ENCODE measurements at regions of chrX and their contacts with region 1.

Region 1: GRCh38 chrX:155026726-155027508 is at the start of gene FUNDC2:
- DNase-seq: peak; percentile 87
- ATAC-seq: peak; percentile 93
- H3K4me3 ChIP-seq: peak within 1 kb of the TSS; percentile 63 to 89 (median 78)
- H3K27ac ChIP-seq: peak within 1 kb of the TSS; percentile 97
- H3K4me1 ChIP-seq: peaks cover 33% of the 10 kb centered on the region; the same call in 1 of the 2 replicates
- H3K27me3 ChIP-seq: no peaks in the 10 kb centered on the region; a peak in 1 of 5 replicates
- CTCF ChIP-seq: no peak
- EP300 ChIP-seq: no peak
- POLR2A ChIP-seq: peak; percentile 67 to 83
- RAD21 ChIP-seq: no peak
- total RNA-seq, gene FUNDC2: 65.3 and 81.6 TPM in 2 replicates

Region 2: GRCh38 chrX:154712781-154713740 is 313.9 kb before region 1 on chrX:
- CTCF ChIA-PET with region 1: no interaction called
- POLR2A ChIA-PET with region 1: no interaction called
- in situ Hi-C with region 1: no loop called
- intact Hi-C with region 1: no loop called
- DNase-seq: no peak
- ATAC-seq: no peak
- H3K4me3 ChIP-seq: no peak overlapping the region
- H3K27ac ChIP-seq: no peak overlapping the region
- H3K4me1 ChIP-seq: no peaks in the 10 kb centered on the region
- H3K27me3 ChIP-seq: no peaks in the 10 kb centered on the region
- CTCF ChIP-seq: no peak
- EP300 ChIP-seq: no peak
- POLR2A ChIP-seq: no peak
- RAD21 ChIP-seq: no peak

Region 3: GRCh38 chrX:154986826-154987576 is 39.9 kb before region 1 on chrX:
- CTCF ChIA-PET with region 1: no interaction called
- POLR2A ChIA-PET with region 1: interaction called, 15 read pairs
- in situ Hi-C with region 1: no loop called
- intact Hi-C with region 1: loop called (anchors 1 kb)
- DNase-seq: no peak
- ATAC-seq: no peak
- H3K4me3 ChIP-seq: peak overlapping the region in 1 of 3 experiments; percentile 10; a peak in 1 of 6 replicates
- H3K27ac ChIP-seq: no peak overlapping the region
- H3K4me1 ChIP-seq: peaks cover 23% of the 10 kb centered on the region
- H3K27me3 ChIP-seq: no peaks in the 10 kb centered on the region
- CTCF ChIP-seq: 0 out of 2 replicates have a peak, but pooled peaks have one; percentile 31
- EP300 ChIP-seq: no peak
- POLR2A ChIP-seq: no peak
- RAD21 ChIP-seq: no peak

Region 4: GRCh38 chrX:155070975-155071693 is 44.2 kb after region 1 on chrX and contains the starts of genes BRCC3, CMC4 and MTCP1:
- CTCF ChIA-PET with region 1: no interaction called
- POLR2A ChIA-PET with region 1: interaction called, 7 read pairs
- in situ Hi-C with region 1: no loop called
- intact Hi-C with region 1: loop called (anchors 5 kb)
- DNase-seq: peak; percentile 65
- ATAC-seq: peak; percentile 97
- H3K4me3 ChIP-seq: peak within 1 kb of the TSS; percentile 72 to 86 (median 79)
- H3K27ac ChIP-seq: peak within 1 kb of the TSS; percentile 77
- H3K4me1 ChIP-seq: peaks cover 45% of the 10 kb centered on the region
- H3K27me3 ChIP-seq: no peaks in the 10 kb centered on the region
- CTCF ChIP-seq: no peak
- EP300 ChIP-seq: no peak
- POLR2A ChIP-seq: peak; percentile 80 to 93
- RAD21 ChIP-seq: no peak
- total RNA-seq, gene BRCC3: 24.3 and 44.2 TPM in 2 replicates
- total RNA-seq, gene CMC4: 5.2 and 5.6 TPM in 2 replicates
- total RNA-seq, gene MTCP1: 13.6 and 18.9 TPM in 2 replicates